ENCODE measurements at regions of chr17 and their contacts with region 1.

Region 1: DNA sequence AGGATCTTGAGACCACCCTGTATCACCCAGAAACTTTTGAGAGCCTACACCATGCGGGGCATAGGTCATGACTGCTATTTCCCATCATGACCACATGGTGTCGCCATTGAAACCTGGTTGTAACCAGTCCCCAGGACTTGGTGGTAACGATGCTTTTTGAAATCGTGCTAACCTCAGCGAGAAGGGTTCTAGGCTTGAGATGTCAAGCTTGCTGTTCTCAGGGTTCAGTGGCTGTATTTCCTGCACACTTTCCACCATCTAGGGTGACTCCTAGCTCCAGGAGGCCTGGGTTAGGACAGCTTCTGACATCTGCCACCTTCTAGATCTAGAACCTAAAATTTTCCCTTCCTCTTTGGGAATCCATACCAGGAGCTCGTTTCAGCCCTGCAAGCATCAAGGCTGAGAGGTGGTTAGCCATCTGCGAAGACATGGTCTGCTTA is 13.0 kb upstream of the SPNS3 start:
- DNase-seq: peak; percentile 56 to 67
- H3K4me3 ChIP-seq: no peak overlapping the region
- H3K27ac ChIP-seq: no peak overlapping the region
- H3K4me1 ChIP-seq: peaks cover 4% of the 10 kb centered on the region; the same call in 1 of the 2 replicates
- H3K27me3 ChIP-seq: no peaks in the 10 kb centered on the region
- CTCF ChIP-seq: peak; percentile 98

Region 2: DNA sequence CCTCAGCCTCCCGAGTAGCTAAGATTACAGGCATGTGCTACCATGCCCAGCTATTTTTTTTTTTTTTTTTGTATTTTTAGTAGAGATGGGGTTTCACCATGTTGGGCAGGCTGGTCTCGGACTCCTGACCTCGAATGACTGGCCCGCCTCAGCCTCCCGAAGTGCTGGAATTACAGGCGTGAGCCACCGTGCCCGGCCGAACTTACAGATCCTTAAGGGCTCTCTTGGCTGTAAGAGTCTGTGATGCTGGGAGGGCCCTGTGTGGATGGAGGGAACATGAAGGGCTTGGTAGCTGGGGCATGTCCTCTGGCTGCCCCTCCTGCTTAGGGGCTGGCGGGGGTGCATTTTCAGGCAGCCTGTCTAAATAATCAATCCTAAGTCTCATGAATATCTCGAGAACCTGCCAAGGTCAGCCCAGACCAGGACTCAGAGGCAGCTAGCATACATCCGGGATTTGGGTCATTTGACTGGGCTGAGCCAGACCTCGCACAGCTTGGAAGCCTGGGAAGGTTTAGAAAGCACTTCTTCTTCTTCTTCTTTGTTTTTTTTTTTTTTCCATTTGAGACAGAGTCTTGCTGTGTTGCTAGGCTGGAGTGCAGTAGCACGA is 30.1 kb after region 1 on chr17:
- CTCF ChIA-PET with region 1: no interaction called
- POLR2A ChIA-PET with region 1: interaction called, 23 read pairs
- intact Hi-C with region 1: no loop called
- DNase-seq: no peak
- H3K4me3 ChIP-seq: no peak overlapping the region
- H3K27ac ChIP-seq: no peak overlapping the region
- H3K4me1 ChIP-seq: peaks cover 29% of the 10 kb centered on the region
- H3K27me3 ChIP-seq: no peaks in the 10 kb centered on the region
- CTCF ChIP-seq: no peak

Region 3: GRCh38 chr17:4463818-4464476 is 43.2 kb after region 1 on chr17:
- CTCF ChIA-PET with region 1: no interaction called
- POLR2A ChIA-PET with region 1: no interaction called
- intact Hi-C with region 1: no loop called
- DNase-seq: no peak
- H3K4me3 ChIP-seq: no peak overlapping the region
- H3K27ac ChIP-seq: no peak overlapping the region
- H3K4me1 ChIP-seq: no peaks in the 10 kb centered on the region; the same call in 1 of the 2 replicates
- H3K27me3 ChIP-seq: no peaks in the 10 kb centered on the region
- CTCF ChIP-seq: no peak

Region 4: DNA sequence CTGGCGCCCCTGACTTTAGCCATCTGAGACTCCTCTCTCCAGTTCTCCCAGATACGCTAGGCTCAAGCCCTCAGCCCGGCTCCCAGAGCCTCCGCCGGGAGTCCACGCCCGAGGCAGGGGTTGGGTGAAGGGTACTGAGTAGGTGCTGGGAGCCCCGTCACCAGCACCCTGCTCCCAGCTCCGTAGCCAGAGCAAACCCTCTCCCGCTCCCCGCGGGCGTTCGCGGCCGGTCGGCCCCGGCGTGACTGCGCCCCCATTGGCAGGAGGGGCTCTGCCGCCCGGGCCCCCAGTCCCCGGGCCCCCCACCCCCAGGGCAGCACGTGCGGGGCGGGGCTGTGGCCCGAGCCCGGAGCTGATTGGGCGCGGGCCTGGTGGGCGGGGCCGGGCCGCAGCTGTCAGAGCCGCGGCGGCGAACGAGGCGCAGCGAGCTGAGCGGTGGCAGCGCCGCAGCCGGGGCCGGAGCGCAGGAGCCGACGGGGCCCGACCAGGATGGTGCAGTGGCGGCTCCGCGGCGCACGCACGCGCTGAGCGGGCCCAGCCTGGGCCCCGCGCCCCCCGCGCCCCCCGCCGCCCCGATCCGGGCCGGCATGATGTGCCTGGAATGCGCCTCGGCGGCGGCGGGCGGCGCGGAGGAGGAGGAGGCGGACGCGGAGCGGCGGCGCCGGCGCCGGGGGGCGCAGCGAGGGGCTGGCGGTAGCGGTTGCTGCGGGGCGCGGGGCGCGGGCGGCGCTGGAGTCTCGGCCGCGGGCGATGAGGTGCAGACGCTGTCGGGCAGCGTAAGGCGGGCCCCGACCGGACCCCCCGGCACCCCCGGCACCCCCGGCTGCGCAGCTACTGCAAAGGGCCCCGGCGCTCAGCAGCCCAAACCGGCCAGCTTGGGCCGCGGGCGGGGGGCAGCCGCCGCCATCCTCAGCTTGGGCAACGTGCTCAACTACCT is 78.0 kb after region 1 on chr17 and contains the start of gene SPNS2:
- CTCF ChIA-PET with region 1: interaction called, 12 read pairs
- POLR2A ChIA-PET with region 1: interaction called, 19 read pairs
- intact Hi-C with region 1: loop called (anchors 2 kb)
- DNase-seq: peak; percentile 77 to 84
- H3K4me3 ChIP-seq: peak within 1 kb of the TSS; percentile 81
- H3K27ac ChIP-seq: peak within 1 kb of the TSS; percentile 78
- H3K4me1 ChIP-seq: peaks cover 66% of the 10 kb centered on the region
- H3K27me3 ChIP-seq: no peaks in the 10 kb centered on the region
- CTCF ChIP-seq: no peak
- total RNA-seq, gene SPNS2: 25.7 and 33.8 TPM in 2 replicates

Region 5: DNA sequence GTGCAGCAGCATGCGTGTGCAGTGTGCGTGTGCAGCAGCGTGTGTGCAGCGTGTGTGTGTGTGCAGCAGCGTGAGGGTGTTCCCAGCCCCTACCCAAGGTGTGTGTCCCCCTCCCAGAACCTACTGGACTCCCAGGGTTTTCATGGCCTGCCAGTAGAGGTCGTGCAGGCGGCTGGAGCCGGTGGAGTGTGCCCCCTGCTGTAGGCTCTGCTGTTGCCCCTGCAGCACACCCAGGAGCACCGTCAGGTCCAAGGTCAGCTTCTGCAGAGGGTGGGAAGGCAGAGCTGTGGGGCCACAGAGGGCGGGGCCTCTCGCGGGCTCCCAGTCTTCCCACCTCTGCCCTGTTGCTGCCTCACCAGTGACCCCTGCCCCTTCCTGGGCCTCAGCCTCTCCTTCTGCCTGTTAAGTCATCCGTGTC is 119.5 kb after region 1 on chr17:
- CTCF ChIA-PET with region 1: interaction called, 8 read pairs
- POLR2A ChIA-PET with region 1: no interaction called
- intact Hi-C with region 1: loop called (anchors 5 kb)
- DNase-seq: no peak
- H3K4me3 ChIP-seq: no peak overlapping the region
- H3K27ac ChIP-seq: 0 out of 2 replicates have a peak overlapping the region, but pooled peaks have one; percentile 26
- H3K4me1 ChIP-seq: no peaks in the 10 kb centered on the region
- H3K27me3 ChIP-seq: no peaks in the 10 kb centered on the region
- CTCF ChIP-seq: no peak; the same call in 1 of the 2 replicates

Region 6: DNA sequence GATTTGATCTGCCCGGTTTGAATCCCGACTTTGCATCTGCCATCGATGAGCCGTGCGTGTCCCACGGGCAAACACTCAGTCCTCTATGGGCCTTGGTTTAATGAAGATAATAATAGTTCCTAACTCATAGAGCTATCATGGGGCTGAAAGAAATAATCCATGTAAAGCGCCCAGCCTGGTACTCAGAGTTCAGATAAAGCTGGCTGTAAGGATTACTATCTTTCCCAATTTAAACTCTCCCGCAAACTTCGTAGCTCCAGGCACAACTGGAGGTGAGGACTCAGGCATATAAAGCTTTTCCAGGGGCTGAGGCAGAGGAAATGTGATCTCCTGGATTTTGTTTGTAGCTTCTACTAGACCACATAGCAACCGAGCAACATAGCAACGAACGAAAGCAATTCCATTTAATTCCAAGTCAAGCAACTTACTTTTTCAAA is 204.5 kb after region 1 on chr17:
- CTCF ChIA-PET with region 1: no interaction called
- POLR2A ChIA-PET with region 1: no interaction called
- intact Hi-C with region 1: loop called (anchors 1 kb)
- DNase-seq: no peak
- H3K4me3 ChIP-seq: no peak overlapping the region
- H3K27ac ChIP-seq: no peak overlapping the region
- H3K4me1 ChIP-seq: no peaks in the 10 kb centered on the region
- H3K27me3 ChIP-seq: peaks cover 9% of the 10 kb centered on the region; the same call in 1 of the 2 replicates
- CTCF ChIP-seq: no peak

Measured in PC-9 (cell line).